Gastrocnemius medialis (tissue), 4 donors: ENCODE measurements at regions of chr2 and their contacts with region 1.

Region 1: GRCh38 chr2:215454519-215455246 is 18.8 kb upstream of the FN1 start:
- DNase-seq: no peak
- ATAC-seq: no peak
- H3K4me3 ChIP-seq: no peak overlapping the region
- H3K27ac ChIP-seq: no peak overlapping the region
- H3K4me1 ChIP-seq: no peaks in the 10 kb centered on the region
- H3K27me3 ChIP-seq: no peaks in the 10 kb centered on the region
- CTCF ChIP-seq: peak; percentile 52 to 68 (median 55)
- POLR2A ChIP-seq: no peak

Region 2: DNA sequence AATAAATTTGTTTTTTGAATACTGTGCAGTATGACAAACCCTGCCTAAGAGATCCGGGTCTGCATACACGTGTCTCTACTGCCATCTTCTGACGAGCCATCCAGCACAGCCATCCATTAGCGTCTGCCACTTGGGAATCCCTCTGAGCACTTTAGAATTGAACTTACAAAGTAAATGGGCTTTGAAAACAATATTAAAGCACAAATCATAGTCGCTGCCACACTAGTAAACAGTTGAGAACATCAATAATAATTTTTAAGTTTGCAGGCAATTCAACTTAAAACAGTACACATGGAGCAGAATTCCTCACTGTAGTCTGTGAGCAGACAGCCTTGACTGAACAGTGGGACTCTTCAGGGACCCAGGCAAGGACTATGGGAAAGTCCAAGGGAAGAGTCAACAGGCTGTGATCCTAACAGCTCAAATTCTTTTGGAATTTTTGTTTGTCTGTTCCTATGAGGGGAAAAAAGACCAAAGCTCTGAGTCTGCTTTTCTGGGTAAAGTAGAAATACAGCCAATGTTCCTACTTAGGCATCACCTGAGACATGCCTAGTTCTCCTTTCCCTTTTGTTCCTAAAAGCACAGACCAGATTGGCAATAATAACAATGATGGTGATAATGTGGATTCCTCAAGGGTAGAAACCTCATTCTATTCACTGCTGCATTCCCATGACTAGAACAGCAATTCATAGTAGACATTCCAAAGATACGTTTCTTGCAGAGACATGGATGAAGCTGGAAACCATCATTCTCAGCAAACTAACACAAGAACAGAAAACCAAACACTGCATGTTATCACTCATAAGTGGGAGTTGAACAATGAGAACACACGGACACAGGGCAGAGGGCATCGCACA is 465.8 kb after region 1 on chr2:
- in situ Hi-C with region 1: loop called in 3 of 4 experiments (anchors 5 to 10 kb)
- intact Hi-C with region 1: loop called (anchors 1 kb)
- DNase-seq: peak; percentile 17 to 37
- ATAC-seq: peak; percentile 82
- H3K4me3 ChIP-seq: no peak overlapping the region
- H3K27ac ChIP-seq: no peak overlapping the region
- H3K4me1 ChIP-seq: no peaks in the 10 kb centered on the region
- H3K27me3 ChIP-seq: no peaks in the 10 kb centered on the region
- CTCF ChIP-seq: peak; percentile 54 to 76 (median 59)
- POLR2A ChIP-seq: no peak

Region 3: GRCh38 chr2:215931256-215931903 is 476.7 kb after region 1 on chr2:
- in situ Hi-C with region 1: loop called in 2 of 4 experiments (anchors 5 to 10 kb)
- intact Hi-C with region 1: loop called (anchors 1 kb)
- DNase-seq: peak; percentile 20 to 30
- ATAC-seq: peak; percentile 69 to 86
- H3K4me3 ChIP-seq: no peak overlapping the region
- H3K27ac ChIP-seq: no peak overlapping the region
- H3K4me1 ChIP-seq: no peaks in the 10 kb centered on the region
- H3K27me3 ChIP-seq: no peaks in the 10 kb centered on the region
- CTCF ChIP-seq: peak; percentile 59 to 91 (median 72)
- POLR2A ChIP-seq: no peak